Heart left ventricle (tissue), 16 donors: ENCODE measurements at regions of chr5 and their contacts with region 1.

Region 1: DNA sequence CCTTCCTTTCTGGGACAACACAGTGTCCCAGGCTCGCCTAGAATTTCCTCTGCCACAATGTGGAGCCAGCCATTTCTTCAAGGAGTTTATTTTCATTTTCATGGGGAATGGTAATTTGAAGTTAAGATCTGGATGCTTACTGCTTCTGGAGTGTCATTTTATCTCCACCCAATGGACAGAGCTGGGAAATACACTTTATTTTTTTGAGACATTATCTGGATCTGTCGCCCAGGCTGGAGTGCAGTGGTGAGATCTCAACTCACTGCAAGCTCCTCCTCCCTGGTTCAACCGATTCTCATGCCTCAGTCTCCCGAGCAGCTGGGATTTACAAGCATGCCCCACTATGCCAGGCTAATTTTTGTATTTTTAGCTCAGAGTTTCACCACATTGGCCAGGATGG is 12.7 kb upstream of the THG1L start:
- DNase-seq: peak in 1 of 5 donors; percentile 19
- ATAC-seq: peak; percentile 51 to 93 (median 84)
- H3K4me3 ChIP-seq: peak overlapping the region in 2 of 12 donors; percentile 12 to 16
- H3K27ac ChIP-seq: peak overlapping the region in 1 of 12 donors; percentile 25
- H3K4me1 ChIP-seq: peaks cover 0 to 12% (median 2%) of the 10 kb centered on the region in 12 donors
- H3K27me3 ChIP-seq: no peaks in the 10 kb centered on the region
- CTCF ChIP-seq: peak; percentile 45 to 77 (median 70)
- POLR2A ChIP-seq: no peak

Region 2: GRCh38 chr5:157328277-157328912 is 390.1 kb before region 1 on chr5:
- intact Hi-C with region 1: loop called in 8 of 10 experiments (anchors 2 to 10 kb)
- DNase-seq: peak in 4 of 5 donors; percentile 59 to 68 (median 60)
- ATAC-seq: peak; percentile 86 to 97 (median 94)
- H3K4me3 ChIP-seq: peak overlapping the region in 9 of 12 donors; percentile 4 to 37 (median 12)
- H3K27ac ChIP-seq: peak overlapping the region in 1 of 12 donors; percentile 24
- H3K4me1 ChIP-seq: peaks cover 0 to 13% (median 0%) of the 10 kb centered on the region in 12 donors
- H3K27me3 ChIP-seq: no peaks in the 10 kb centered on the region
- CTCF ChIP-seq: peak; percentile 80 to 94 (median 90)
- POLR2A ChIP-seq: no peak

Region 3: DNA sequence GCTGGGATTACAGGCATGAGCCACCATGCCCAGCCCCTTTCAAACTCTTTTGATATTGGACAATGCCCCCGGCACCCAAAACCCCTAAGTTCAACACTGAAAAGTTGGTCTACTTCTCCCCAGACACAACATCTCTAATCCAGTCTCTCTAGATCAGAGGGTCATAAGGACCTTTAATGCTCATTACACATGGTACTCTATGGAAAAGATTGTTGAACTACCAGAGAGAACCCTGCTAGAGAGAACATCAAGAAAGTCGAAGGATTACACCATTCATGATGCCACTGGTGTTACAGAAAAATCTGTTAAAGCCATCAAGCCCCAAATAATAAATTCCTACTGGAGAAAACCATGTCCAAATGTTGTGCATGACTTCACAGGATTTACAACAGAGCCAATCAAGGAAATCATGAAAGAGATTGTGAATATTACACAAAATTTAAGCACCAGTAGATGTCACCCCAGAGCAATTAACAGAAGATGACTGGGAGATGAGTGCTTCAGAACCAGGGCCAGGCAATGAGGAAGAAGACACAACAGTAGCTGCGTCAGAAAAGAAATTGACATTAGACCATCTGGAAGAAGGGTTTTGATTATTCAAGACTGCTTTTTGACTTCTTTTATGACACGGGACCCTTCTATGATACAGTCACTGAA is 286.8 kb before region 1 on chr5:
- intact Hi-C with region 1: loop called (anchors 1 to 5 kb)
- DNase-seq: peak in 2 of 5 donors; percentile 24 to 30
- ATAC-seq: peak in 3 of 4 donors; percentile 63 to 87 (median 80)
- H3K4me3 ChIP-seq: no peak overlapping the region
- H3K27ac ChIP-seq: no peak overlapping the region
- H3K4me1 ChIP-seq: peaks cover 0 to 5% (median 0%) of the 10 kb centered on the region in 12 donors
- H3K27me3 ChIP-seq: no peaks in the 10 kb centered on the region
- CTCF ChIP-seq: peak; percentile 41 to 76 (median 60)
- POLR2A ChIP-seq: no peak

Region 4: DNA sequence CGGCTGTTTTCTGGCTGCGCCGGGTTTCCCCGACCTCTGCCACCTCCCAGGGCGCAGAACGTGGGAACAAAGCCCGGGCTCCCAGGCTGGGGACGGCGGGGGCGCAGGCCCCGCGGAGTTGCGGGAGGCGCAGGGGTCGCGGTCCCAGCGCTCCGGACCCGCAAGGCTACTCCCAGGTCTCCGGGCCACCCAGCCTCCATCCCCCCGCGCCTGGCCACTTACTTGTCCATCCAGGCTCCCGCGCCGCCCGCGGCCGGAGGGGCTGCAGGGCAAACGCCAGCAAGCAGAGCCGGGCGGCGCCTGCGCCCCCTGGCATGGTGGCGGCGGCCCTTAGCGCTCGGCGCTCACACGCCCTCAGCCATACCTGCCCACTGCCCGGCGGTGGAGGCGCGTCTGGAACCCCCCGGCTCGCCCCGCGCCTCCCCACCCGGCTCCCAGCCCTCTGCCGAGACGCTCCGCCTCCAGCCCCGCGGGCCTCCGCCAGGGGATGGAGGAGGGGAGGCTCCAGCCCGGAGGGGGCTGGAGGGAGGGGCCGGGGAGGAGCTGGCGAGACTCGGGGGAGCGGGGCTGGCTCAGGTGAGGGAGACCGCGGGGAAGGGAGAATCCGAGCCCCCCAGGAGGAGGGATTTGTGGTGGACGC is 143.0 kb before region 1 on chr5 and contains the start of gene ADAM19:
- intact Hi-C with region 1: loop called in 3 of 10 experiments (anchors 5 to 10 kb)
- DNase-seq: peak; percentile 69 to 82 (median 71)
- ATAC-seq: peak; percentile 53 to 91 (median 89)
- H3K4me3 ChIP-seq: peak within 1 kb of the TSS; percentile 59 to 94 (median 86)
- H3K27ac ChIP-seq: peak within 1 kb of the TSS; percentile 33 to 93 (median 87)
- H3K4me1 ChIP-seq: peaks cover 0 to 53% (median 25%) of the 10 kb centered on the region in 12 donors
- H3K27me3 ChIP-seq: peaks cover 0 to 14% (median 0%) of the 10 kb centered on the region in 9 donors
- CTCF ChIP-seq: peak in 5 of 12 donors; percentile 5 to 28 (median 20)
- POLR2A ChIP-seq: no peak
- total RNA-seq, gene ADAM19: 6.5 to 47.6 (median 19.0) TPM

Region 5: DNA sequence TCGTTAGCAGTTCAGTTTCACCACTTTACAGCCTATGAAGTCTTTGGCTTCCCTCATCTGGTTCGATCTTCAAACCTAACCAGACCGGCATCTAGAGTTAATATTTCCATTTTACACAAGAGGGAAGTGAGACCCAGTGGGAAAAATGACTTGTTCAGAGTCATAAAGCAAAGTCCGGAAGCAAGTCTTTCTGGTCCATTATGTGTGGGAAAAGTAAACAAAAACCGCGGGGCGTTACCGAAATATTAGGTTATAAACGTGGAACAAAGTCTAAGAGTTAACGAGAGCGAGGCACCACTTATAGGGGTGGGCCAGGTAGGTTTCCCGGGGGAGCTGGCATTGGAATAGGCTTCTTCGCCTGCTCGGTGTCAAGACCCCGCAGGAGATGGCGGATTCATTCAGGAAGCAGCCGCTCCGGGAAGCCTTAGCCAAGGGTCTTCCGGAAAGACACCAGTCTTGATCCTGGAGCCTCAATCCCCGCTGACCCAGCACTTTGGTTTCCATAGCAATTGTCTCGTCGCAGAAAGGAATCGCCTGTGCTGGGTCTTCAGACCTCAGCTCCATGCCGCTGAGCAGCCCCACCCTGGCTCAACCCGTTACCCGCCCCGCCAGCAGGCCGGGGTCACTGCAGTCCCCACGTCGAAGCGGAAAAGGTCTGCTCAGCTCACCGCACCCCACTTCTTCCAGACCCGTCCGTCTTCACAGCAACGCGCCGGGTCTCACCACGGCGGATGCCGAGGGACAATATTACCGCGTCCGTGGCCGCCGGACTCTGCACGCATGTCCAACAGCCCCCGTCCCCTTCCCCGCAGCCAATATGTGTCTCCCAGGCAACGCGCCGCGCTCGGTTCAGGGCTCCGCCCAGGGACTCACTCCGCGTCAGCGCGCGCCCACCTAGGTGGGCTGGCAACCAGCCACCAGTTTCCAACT is 47.6 kb before region 1 on chr5 and contains the start of gene C5orf52:
- intact Hi-C with region 1: loop called in 3 of 10 experiments (anchors 5 to 10 kb)
- DNase-seq: peak; percentile 27 to 70 (median 45)
- ATAC-seq: peak in 3 of 4 donors; percentile 59 to 79 (median 63)
- H3K4me3 ChIP-seq: peak within 1 kb of the TSS; percentile 41 to 72 (median 62)
- H3K27ac ChIP-seq: peak within 1 kb of the TSS in 2 of 12 donors; percentile 1 to 20
- H3K4me1 ChIP-seq: peaks cover 0 to 18% (median 7%) of the 10 kb centered on the region in 12 donors
- H3K27me3 ChIP-seq: peaks cover 4 to 24% (median 6%) of the 10 kb centered on the region in 9 donors
- CTCF ChIP-seq: no peak
- POLR2A ChIP-seq: no peak
- total RNA-seq, gene C5orf52: not detected

Region 6: GRCh38 chr5:157761690-157762621 is 43.4 kb after region 1 on chr5:
- intact Hi-C with region 1: no loop called
- DNase-seq: no peak
- ATAC-seq: peak; percentile 32 to 86 (median 77)
- H3K4me3 ChIP-seq: no peak overlapping the region
- H3K27ac ChIP-seq: no peak overlapping the region
- H3K4me1 ChIP-seq: peaks cover 0 to 6% (median 0%) of the 10 kb centered on the region in 12 donors
- H3K27me3 ChIP-seq: no peaks in the 10 kb centered on the region
- CTCF ChIP-seq: peak; percentile 62 to 83 (median 78)
- POLR2A ChIP-seq: no peak